ENCODE measurements at regions of chr18 and their contacts with region 1.

Region 1: GRCh38 chr18:13364721-13365205 is 146.2 kb downstream of the LDLRAD4 start:
- DNase-seq: no peak
- ATAC-seq: no peak
- H3K4me3 Mint-ChIP-seq: no peak overlapping the region
- H3K27ac Mint-ChIP-seq: no peak overlapping the region
- H3K4me1 Mint-ChIP-seq: peaks cover 30% of the 10 kb centered on the region
- H3K27me3 Mint-ChIP-seq: no peaks in the 10 kb centered on the region
- CTCF ChIP-seq: no peak

Region 2: DNA sequence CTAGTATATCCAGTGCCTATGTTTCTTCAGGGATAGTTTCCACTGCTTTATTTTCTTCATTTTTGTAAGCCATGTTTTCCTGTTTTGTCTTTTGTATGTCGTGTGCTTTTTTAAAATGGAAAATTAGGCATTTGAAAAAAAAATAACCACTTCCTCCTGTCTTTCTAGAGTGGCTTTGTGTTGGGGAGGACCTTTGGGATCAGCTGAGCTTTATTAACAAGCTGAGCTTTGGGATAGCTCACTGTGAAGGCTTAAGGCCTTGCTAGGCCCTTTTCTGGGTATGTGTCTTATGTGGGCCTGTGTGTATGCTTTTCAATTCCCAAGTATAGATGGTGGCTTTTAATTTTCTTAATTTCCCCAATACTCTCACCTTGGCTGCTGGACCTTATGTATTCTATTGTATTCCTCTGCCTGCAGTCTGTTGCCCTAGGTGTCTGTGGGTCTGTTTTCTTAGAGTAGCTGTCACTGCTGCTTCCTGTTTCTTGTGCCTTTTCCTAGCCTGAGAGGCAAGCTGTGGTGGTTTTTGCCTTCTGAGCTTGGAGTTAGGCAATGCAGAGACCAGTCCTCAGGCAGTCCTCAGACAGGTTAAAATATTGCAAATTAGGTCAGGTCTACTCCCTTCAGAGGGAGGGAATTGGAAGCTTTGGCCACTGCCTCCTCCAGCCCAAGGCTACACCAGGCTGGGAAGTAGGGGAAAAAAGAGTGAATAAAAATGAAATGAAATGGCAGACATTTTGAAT is 11.5 kb before region 1 on chr18:
- CTCF ChIA-PET with region 1: interaction called, 12 read pairs
- POLR2A ChIA-PET with region 1: interaction called, 3 read pairs
- intact Hi-C with region 1: no loop called
- DNase-seq: no peak
- ATAC-seq: peak; percentile 74
- H3K4me3 Mint-ChIP-seq: no peak overlapping the region
- H3K27ac Mint-ChIP-seq: peak overlapping the region; percentile 53
- H3K4me1 Mint-ChIP-seq: peaks cover 28% of the 10 kb centered on the region
- H3K27me3 Mint-ChIP-seq: no peaks in the 10 kb centered on the region
- CTCF ChIP-seq: no peak

Region 3: GRCh38 chr18:13530879-13531387 is 166.2 kb after region 1 on chr18:
- CTCF ChIA-PET with region 1: no interaction called
- POLR2A ChIA-PET with region 1: no interaction called
- intact Hi-C with region 1: no loop called
- DNase-seq: peak; percentile 29
- ATAC-seq: peak; percentile 49
- H3K4me3 Mint-ChIP-seq: no peak overlapping the region
- H3K27ac Mint-ChIP-seq: no peak overlapping the region
- H3K4me1 Mint-ChIP-seq: peaks cover 37% of the 10 kb centered on the region
- H3K27me3 Mint-ChIP-seq: no peaks in the 10 kb centered on the region
- CTCF ChIP-seq: no peak

Measured in activated CD8-positive, alpha-beta T cell treated with anti-CD3 and anti-CD28 coated beads for 36 hours (primary cell).